ENCODE measurements at regions of chr6 and their contacts with region 1.

Region 1: GRCh38 chr6:14165091-14165490 is 47.5 kb downstream of the CD83 start:
- DNase-seq: no peak
- ATAC-seq: no peak
- H3K4me3 ChIP-seq: no peak overlapping the region
- H3K4me3 Mint-ChIP-seq: no peak overlapping the region
- H3K27ac ChIP-seq: no peak overlapping the region
- H3K27ac Mint-ChIP-seq: no peak overlapping the region
- H3K4me1 ChIP-seq: no peaks in the 10 kb centered on the region
- H3K4me1 Mint-ChIP-seq: no peaks in the 10 kb centered on the region
- H3K27me3 ChIP-seq: no peaks in the 10 kb centered on the region
- H3K27me3 Mint-ChIP-seq: peaks cover 0 to 7% of the 10 kb centered on the region in 2 donors

Region 2: GRCh38 chr6:14228571-14228970 is 63.5 kb after region 1 on chr6:
- CTCF ChIA-PET with region 1: no interaction called
- POLR2A ChIA-PET with region 1: no interaction called
- DNase-seq: peak in 17 of 35 experiments; percentile 4 to 65 (median 14)
- ATAC-seq: peak; percentile 43 to 86 (median 61)
- H3K4me3 ChIP-seq: peak overlapping the region in 1 of 2 donors; percentile 2
- H3K4me3 Mint-ChIP-seq: no peak overlapping the region
- H3K27ac ChIP-seq: no peak overlapping the region
- H3K27ac Mint-ChIP-seq: no peak overlapping the region
- H3K4me1 ChIP-seq: peaks cover 6 to 10% of the 10 kb centered on the region in 2 experiments
- H3K4me1 Mint-ChIP-seq: peaks cover 19 to 25% (median 24%) of the 10 kb centered on the region in 3 donors
- H3K27me3 ChIP-seq: no peaks in the 10 kb centered on the region
- H3K27me3 Mint-ChIP-seq: no peaks in the 10 kb centered on the region

Region 3: GRCh38 chr6:14254505-14254904 is 89.4 kb after region 1 on chr6:
- CTCF ChIA-PET with region 1: no interaction called
- POLR2A ChIA-PET with region 1: no interaction called
- DNase-seq: no peak
- ATAC-seq: no peak
- H3K4me3 ChIP-seq: no peak overlapping the region
- H3K4me3 Mint-ChIP-seq: no peak overlapping the region
- H3K27ac ChIP-seq: no peak overlapping the region
- H3K27ac Mint-ChIP-seq: no peak overlapping the region
- H3K4me1 ChIP-seq: no peaks in the 10 kb centered on the region
- H3K4me1 Mint-ChIP-seq: peaks cover 0 to 6% (median 5%) of the 10 kb centered on the region in 3 donors
- H3K27me3 ChIP-seq: no peaks in the 10 kb centered on the region
- H3K27me3 Mint-ChIP-seq: no peaks in the 10 kb centered on the region

Region 4: GRCh38 chr6:14265049-14266021 is 100.2 kb after region 1 on chr6:
- CTCF ChIA-PET with region 1: interaction called in 1 of 2 experiments, 10 read pairs
- POLR2A ChIA-PET with region 1: no interaction called
- DNase-seq: no peak
- ATAC-seq: peak in 3 of 4 experiments; percentile 53 to 58 (median 55)
- H3K4me3 ChIP-seq: no peak overlapping the region
- H3K4me3 Mint-ChIP-seq: no peak overlapping the region
- H3K27ac ChIP-seq: no peak overlapping the region
- H3K27ac Mint-ChIP-seq: peak overlapping the region in 1 of 2 donors; percentile 52
- H3K4me1 ChIP-seq: peaks cover 11% of the 10 kb centered on the region in 2 experiments
- H3K4me1 Mint-ChIP-seq: peaks cover 5 to 22% (median 21%) of the 10 kb centered on the region in 3 donors
- H3K27me3 ChIP-seq: no peaks in the 10 kb centered on the region
- H3K27me3 Mint-ChIP-seq: no peaks in the 10 kb centered on the region

Measured in T-cell (primary cell).